Lower leg skin (tissue), 4 donors: ENCODE measurements at regions of chr5 and their contacts with region 1.

Region 1: GRCh38 chr5:155728146-155728856 is 598.7 kb upstream of the SGCD start:
- DNase-seq: peak in 1 of 2 donors; percentile 84
- H3K4me3 ChIP-seq: peak overlapping the region; percentile 5
- CTCF ChIP-seq: no peak
- POLR2A ChIP-seq: no peak

Region 2: GRCh38 chr5:155485386-155485785 is 242.9 kb before region 1 on chr5:
- intact Hi-C with region 1: no loop called
- DNase-seq: no peak
- H3K4me3 ChIP-seq: no peak overlapping the region
- CTCF ChIP-seq: no peak
- POLR2A ChIP-seq: no peak

Region 3: GRCh38 chr5:155697236-155697635 is 31.1 kb before region 1 on chr5:
- intact Hi-C with region 1: loop called (anchors 1 kb)
- DNase-seq: no peak
- H3K4me3 ChIP-seq: no peak overlapping the region
- CTCF ChIP-seq: no peak
- POLR2A ChIP-seq: no peak